Gastrocnemius medialis (tissue), 4 donors: ENCODE measurements at regions of chr4 and their contacts with region 1.

Region 1: GRCh38 chr4:83535520-83536361 is at the start of gene GPAT3:
- DNase-seq: peak; percentile 86 to 94
- ATAC-seq: peak; percentile 81 to 87
- H3K4me3 ChIP-seq: peak within 1 kb of the TSS; percentile 81 to 95 (median 86)
- H3K27ac ChIP-seq: peak within 1 kb of the TSS; percentile 95 to 99 (median 98)
- H3K4me1 ChIP-seq: peaks cover 14 to 17% of the 10 kb centered on the region in 2 donors
- H3K27me3 ChIP-seq: no peaks in the 10 kb centered on the region
- CTCF ChIP-seq: no peak
- POLR2A ChIP-seq: peak; percentile 88 to 93
- total RNA-seq, gene GPAT3: 9.5 to 183 (median 26.5) TPM

Region 2: DNA sequence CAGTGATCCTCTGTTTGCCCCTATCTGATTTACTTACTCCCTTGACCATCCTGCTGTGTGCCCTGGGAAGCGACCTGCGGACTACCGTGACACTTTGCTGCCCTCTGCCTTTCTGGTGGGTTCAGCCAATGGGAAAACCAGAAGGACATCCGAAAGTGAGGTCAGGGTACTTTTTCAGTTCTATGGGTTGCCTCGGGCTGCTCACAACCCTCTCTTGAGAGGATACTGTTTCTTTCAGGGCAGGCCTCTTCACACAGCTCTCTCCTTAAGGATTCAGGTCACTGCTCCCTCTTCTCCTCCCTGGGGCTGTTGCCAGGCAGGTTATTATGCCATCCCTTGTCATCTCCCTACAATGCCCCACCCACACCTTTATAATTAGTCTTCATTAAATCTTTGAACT is 442.6 kb before region 1 on chr4:
- in situ Hi-C with region 1: no loop called
- intact Hi-C with region 1: no loop called
- DNase-seq: no peak
- ATAC-seq: no peak
- H3K4me3 ChIP-seq: no peak overlapping the region
- H3K27ac ChIP-seq: no peak overlapping the region
- H3K4me1 ChIP-seq: no peaks in the 10 kb centered on the region
- H3K27me3 ChIP-seq: no peaks in the 10 kb centered on the region
- CTCF ChIP-seq: peak in 1 of 5 experiments; percentile 12
- POLR2A ChIP-seq: no peak

Region 3: DNA sequence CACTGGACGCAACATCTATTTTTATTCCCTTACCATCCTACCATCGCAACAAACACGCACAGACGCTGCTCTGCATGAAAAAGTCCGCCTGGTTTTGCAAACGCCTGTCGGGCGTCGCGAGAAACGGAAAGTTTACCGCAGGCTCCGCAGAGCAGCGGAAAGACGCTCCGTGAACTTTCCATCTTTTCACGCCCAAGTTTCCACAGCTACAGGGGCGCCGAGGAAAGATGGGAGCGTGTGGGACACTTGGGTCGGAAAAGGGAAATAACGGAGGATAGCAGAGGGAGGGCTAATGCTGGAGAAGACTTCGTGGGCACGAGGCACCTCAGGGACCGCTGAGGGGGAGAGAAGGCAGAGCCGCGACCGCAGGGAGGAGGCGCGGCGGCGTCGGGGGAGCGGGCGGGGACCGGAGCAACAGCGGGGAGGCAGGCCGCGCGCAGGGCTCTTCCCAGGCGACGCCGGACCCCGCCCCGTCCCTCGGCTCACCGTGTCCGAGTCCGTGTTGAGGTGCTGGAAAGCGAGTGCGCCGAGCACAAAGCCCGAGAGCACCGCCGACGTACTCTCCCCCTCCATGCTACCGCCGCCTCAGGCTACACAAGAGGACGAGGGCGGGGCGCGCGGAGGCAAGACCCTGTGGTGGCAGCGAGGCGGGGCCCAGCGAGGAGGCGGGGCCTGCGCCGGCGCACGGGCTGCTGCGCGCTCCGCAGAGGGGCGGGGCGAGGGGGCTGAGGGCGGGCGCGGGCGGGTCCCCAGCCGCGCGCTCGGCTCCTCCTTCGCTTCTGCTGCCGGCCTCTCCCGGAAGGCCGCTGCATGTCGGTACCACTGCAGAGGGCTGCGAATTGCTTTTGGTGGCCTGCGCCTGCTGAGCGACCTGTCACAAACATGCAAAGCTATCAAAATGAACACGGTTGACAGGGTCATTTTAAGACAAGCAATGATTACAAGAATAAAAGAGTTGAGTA is 51.0 kb before region 1 on chr4 and contains the start of gene ABRAXAS1:
- in situ Hi-C with region 1: no loop called
- intact Hi-C with region 1: loop called (anchors 2 kb)
- DNase-seq: peak; percentile 88 to 93
- ATAC-seq: peak; percentile 92 to 98
- H3K4me3 ChIP-seq: peak within 1 kb of the TSS; percentile 86 to 95 (median 90)
- H3K27ac ChIP-seq: peak within 1 kb of the TSS; percentile 81 to 96 (median 90)
- H3K4me1 ChIP-seq: peaks cover 13 to 18% of the 10 kb centered on the region in 2 donors
- H3K27me3 ChIP-seq: no peaks in the 10 kb centered on the region
- CTCF ChIP-seq: no peak
- POLR2A ChIP-seq: peak; percentile 92 to 96
- total RNA-seq, gene ABRAXAS1: 4.8 to 12.4 (median 7.0) TPM

Region 4: DNA sequence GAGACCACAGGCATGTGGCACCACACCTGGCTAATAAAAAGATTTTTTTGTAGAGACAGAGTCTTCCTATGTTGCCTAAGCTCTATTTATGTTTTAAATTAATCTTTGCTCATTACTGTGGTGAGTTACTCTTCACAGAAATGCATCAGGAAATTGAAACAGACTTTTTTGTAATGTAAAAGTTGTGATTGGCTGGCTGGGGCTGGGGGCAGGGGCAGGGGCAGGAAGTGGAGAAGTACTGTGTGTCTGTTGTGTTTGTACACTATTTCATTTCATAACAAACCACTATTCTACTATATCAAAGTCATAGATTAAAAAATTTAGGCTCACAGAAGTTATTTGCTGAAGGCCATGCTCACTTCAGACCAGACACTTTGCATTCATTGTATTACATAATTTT is 31.8 kb before region 1 on chr4:
- in situ Hi-C with region 1: no loop called
- intact Hi-C with region 1: loop called (anchors 1 kb)
- DNase-seq: no peak
- ATAC-seq: no peak
- H3K4me3 ChIP-seq: no peak overlapping the region
- H3K27ac ChIP-seq: no peak overlapping the region
- H3K4me1 ChIP-seq: no peaks in the 10 kb centered on the region
- H3K27me3 ChIP-seq: no peaks in the 10 kb centered on the region
- CTCF ChIP-seq: no peak
- POLR2A ChIP-seq: no peak

Region 5: GRCh38 chr4:83569987-83570386 is 34.2 kb after region 1 on chr4:
- in situ Hi-C with region 1: no loop called
- intact Hi-C with region 1: loop called (anchors 5 kb)
- DNase-seq: no peak
- ATAC-seq: no peak
- H3K4me3 ChIP-seq: no peak overlapping the region
- H3K27ac ChIP-seq: peak overlapping the region in 2 of 4 donors; percentile 30 to 44
- H3K4me1 ChIP-seq: peaks cover 13 to 30% of the 10 kb centered on the region in 2 donors
- H3K27me3 ChIP-seq: no peaks in the 10 kb centered on the region
- CTCF ChIP-seq: no peak
- POLR2A ChIP-seq: no peak

Region 6: DNA sequence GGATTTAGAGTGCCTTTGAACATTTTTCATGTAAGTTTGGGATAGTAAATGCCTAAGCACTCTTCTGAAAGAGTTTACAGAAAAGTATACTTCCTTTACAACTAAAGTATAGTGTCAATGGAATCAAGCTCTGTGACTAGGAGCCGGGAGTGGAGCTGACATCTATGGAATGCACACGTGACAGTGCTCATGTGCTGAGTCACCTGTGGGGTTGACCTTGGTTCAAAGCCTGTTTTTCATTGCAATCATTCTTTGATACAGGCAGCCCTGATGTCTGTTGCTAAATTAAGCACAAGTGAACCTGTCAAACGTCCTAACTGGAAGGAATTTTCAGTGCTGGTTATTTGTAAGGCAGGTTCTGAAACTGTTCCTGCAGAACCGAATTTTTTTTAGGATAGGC is 82.7 kb after region 1 on chr4:
- in situ Hi-C with region 1: no loop called
- intact Hi-C with region 1: loop called (anchors 2 kb)
- DNase-seq: peak; percentile 57 to 78
- ATAC-seq: peak; percentile 94 to 98
- H3K4me3 ChIP-seq: no peak overlapping the region
- H3K27ac ChIP-seq: peak overlapping the region; percentile 83 to 86 (median 84)
- H3K4me1 ChIP-seq: peaks cover 20 to 26% of the 10 kb centered on the region in 2 donors
- H3K27me3 ChIP-seq: no peaks in the 10 kb centered on the region
- CTCF ChIP-seq: no peak
- POLR2A ChIP-seq: peak in 1 of 2 donors; percentile 13

Region 7: GRCh38 chr4:83629945-83630721 is 94.4 kb after region 1 on chr4:
- in situ Hi-C with region 1: loop called in 1 of 4 experiments (anchors 5 kb)
- intact Hi-C with region 1: loop called (anchors 1 kb)
- DNase-seq: no peak
- ATAC-seq: no peak
- H3K4me3 ChIP-seq: peak overlapping the region in 1 of 4 donors; percentile 14
- H3K27ac ChIP-seq: peak overlapping the region; percentile 1 to 44 (median 40)
- H3K4me1 ChIP-seq: peaks cover 38 to 43% of the 10 kb centered on the region in 2 donors
- H3K27me3 ChIP-seq: no peaks in the 10 kb centered on the region
- CTCF ChIP-seq: no peak
- POLR2A ChIP-seq: no peak